HCT116 (cell line): ENCODE measurements at regions of chr17 and their contacts with region 1.

Region 1: GRCh38 chr17:37609170-37610040 is at the start of gene SYNRG:
- DNase-seq: peak; percentile 86
- ATAC-seq: peak; percentile 92
- H3K4me3 ChIP-seq: peak within 1 kb of the TSS; percentile 85 to 91
- H3K27ac ChIP-seq: peak within 1 kb of the TSS; percentile 75
- H3K4me1 ChIP-seq: peaks cover 15 to 26% of the 10 kb centered on the region in 2 experiments
- H3K27me3 ChIP-seq: no peaks in the 10 kb centered on the region
- CTCF ChIP-seq: peak in 2 of 3 experiments; percentile 23 to 29; a peak in 2 of 6 replicates
- POLR2A ChIP-seq: peak; percentile 80
- RAD21 ChIP-seq: peak; percentile 34
- total RNA-seq, gene SYNRG: 23.8 TPM

Region 2: DNA sequence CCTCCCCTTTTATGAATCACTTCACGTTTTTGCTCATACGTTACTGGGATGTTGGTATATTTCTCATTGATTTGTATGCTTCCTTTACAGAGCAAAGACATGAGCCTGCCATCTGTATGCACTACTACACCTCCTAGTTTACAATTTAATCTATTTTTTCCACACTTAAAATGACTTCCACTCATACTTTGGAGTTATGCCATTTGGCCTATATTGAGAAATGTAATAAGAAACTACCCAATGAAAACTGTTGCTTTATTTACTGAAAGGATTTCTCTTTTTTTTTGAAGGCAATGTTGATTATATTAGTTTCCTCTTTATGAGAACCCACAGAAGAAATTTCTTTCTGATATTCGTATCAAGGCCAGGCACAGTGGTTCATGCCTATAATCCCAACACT is 76.6 kb before region 1 on chr17:
- CTCF ChIA-PET with region 1: no interaction called
- POLR2A ChIA-PET with region 1: no interaction called
- RAD21 ChIA-PET with region 1: no interaction called
- intact Hi-C with region 1: no loop called
- DNase-seq: no peak
- ATAC-seq: no peak
- H3K4me3 ChIP-seq: no peak overlapping the region
- H3K27ac ChIP-seq: no peak overlapping the region
- H3K4me1 ChIP-seq: no peaks in the 10 kb centered on the region
- H3K27me3 ChIP-seq: no peaks in the 10 kb centered on the region
- CTCF ChIP-seq: no peak
- POLR2A ChIP-seq: no peak
- RAD21 ChIP-seq: no peak

Region 3: GRCh38 chr17:37551788-37552187 is 57.6 kb before region 1 on chr17:
- CTCF ChIA-PET with region 1: no interaction called
- POLR2A ChIA-PET with region 1: no interaction called
- RAD21 ChIA-PET with region 1: no interaction called
- intact Hi-C with region 1: loop called (anchors 10 kb)
- DNase-seq: no peak
- ATAC-seq: no peak
- H3K4me3 ChIP-seq: no peak overlapping the region
- H3K27ac ChIP-seq: no peak overlapping the region
- H3K4me1 ChIP-seq: no peaks in the 10 kb centered on the region
- H3K27me3 ChIP-seq: no peaks in the 10 kb centered on the region
- CTCF ChIP-seq: no peak
- POLR2A ChIP-seq: no peak
- RAD21 ChIP-seq: no peak

Region 4: DNA sequence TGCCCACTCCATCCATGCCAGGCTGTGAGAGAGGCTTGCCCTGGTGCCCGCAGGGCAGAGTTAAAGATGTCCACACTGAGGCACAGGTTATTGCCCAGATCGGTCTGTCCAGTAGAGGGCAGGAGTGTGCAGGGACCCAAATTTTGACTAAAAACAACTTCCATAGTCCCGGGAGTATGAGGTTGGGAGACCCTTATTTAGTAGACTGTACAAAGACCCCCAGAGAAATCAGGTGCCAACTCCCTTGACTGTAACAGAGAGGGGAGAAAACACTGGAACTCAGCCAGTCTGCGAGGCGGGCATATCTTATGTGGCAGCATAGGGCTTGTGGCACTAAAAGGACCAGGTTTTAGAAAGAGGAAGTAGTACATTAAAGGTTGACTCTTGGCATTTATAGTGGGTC is 92.1 kb after region 1 on chr17:
- CTCF ChIA-PET with region 1: no interaction called
- POLR2A ChIA-PET with region 1: no interaction called
- RAD21 ChIA-PET with region 1: no interaction called
- intact Hi-C with region 1: no loop called
- DNase-seq: peak; percentile 18
- ATAC-seq: peak; percentile 79
- H3K4me3 ChIP-seq: no peak overlapping the region
- H3K27ac ChIP-seq: no peak overlapping the region
- H3K4me1 ChIP-seq: peaks cover 9 to 40% of the 10 kb centered on the region in 2 experiments
- H3K27me3 ChIP-seq: no peaks in the 10 kb centered on the region
- CTCF ChIP-seq: peak; percentile 57 to 87 (median 81)
- POLR2A ChIP-seq: no peak
- RAD21 ChIP-seq: peak; percentile 63

Region 5: GRCh38 chr17:37744961-37745800 is 135.8 kb after region 1 on chr17 and contains the start of gene HNF1B:
- CTCF ChIA-PET with region 1: no interaction called
- POLR2A ChIA-PET with region 1: no interaction called
- RAD21 ChIA-PET with region 1: no interaction called
- intact Hi-C with region 1: no loop called
- DNase-seq: no peak
- ATAC-seq: peak; percentile 24; the same call in 1 of the 2 replicates
- H3K4me3 ChIP-seq: peak within 1 kb of the TSS; percentile 54 to 62
- H3K27ac ChIP-seq: peak within 1 kb of the TSS; percentile 76
- H3K4me1 ChIP-seq: peaks cover 0 to 7% of the 10 kb centered on the region in 2 experiments; a peak in 2 of 4 replicates
- H3K27me3 ChIP-seq: no peaks in the 10 kb centered on the region
- CTCF ChIP-seq: no peak
- POLR2A ChIP-seq: no peak
- RAD21 ChIP-seq: no peak
- total RNA-seq, gene HNF1B: 3.6 TPM